MCF 10A (cell line): ENCODE measurements at regions of chr11 and their contacts with region 1.

Region 1: GRCh38 chr11:62427630-62428233 is 8.9 kb downstream of the SCGB1A1 start:
- DNase-seq: no peak
- H3K4me3 Mint-ChIP-seq: no peak overlapping the region
- H3K27ac Mint-ChIP-seq: no peak overlapping the region
- H3K4me1 Mint-ChIP-seq: peaks cover 7% of the 10 kb centered on the region
- H3K27me3 Mint-ChIP-seq: no peaks in the 10 kb centered on the region
- CTCF ChIP-seq: no peak

Region 2: DNA sequence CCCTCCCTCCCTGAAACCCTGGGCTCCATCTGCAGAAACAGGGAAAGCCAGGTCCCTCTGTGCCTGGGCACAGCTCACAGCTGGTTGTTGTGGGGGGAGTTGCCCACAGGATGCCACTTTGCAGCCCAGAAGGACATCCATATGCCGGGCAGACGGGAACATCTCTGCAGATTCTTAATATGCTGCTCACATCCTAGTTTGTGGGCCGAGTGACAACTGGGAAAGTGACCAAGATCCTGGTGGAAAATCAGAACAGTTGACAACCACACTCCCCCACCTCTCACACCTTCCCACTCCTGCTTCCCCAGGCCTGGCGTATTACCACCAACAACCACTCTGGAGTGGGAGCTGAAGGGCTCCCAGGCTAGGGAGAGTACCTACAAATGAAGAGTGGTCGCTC is 16.2 kb before region 1 on chr11:
- CTCF ChIA-PET with region 1: interaction called, 10 read pairs
- POLR2A ChIA-PET with region 1: interaction called, 6 read pairs
- intact Hi-C with region 1: no loop called
- DNase-seq: no peak
- H3K4me3 Mint-ChIP-seq: no peak overlapping the region
- H3K27ac Mint-ChIP-seq: no peak overlapping the region
- H3K4me1 Mint-ChIP-seq: no peaks in the 10 kb centered on the region
- H3K27me3 Mint-ChIP-seq: no peaks in the 10 kb centered on the region
- CTCF ChIP-seq: no peak